ENCODE measurements at regions of chr17 and their contacts with region 1.

Region 1: DNA sequence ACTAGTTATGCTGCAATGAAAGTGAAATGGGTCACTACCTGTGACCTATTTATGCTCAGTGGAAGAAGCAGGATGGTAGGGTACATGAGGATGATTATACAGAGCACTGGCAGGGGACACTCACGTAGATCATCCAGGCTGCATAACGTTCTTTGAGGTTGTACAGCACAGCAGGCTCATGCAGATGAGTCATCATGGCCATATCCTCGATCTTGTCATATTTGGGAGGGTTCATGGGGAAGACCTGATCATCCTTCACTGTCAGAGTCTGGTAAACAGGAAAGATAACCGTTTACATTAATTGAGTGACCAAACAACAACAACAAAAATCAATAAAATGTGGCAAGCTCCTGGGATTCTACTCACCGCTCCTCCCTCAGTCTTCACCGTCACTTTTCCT is 2.1 kb downstream of the MYH2 start:
- DNase-seq: no peak
- H3K4me3 ChIP-seq: no peak overlapping the region
- H3K27ac ChIP-seq: no peak overlapping the region
- H3K4me1 ChIP-seq: no peaks in the 10 kb centered on the region
- H3K27me3 ChIP-seq: no peaks in the 10 kb centered on the region
- CTCF ChIP-seq: no peak
- POLR2A ChIP-seq: no peak

Region 2: DNA sequence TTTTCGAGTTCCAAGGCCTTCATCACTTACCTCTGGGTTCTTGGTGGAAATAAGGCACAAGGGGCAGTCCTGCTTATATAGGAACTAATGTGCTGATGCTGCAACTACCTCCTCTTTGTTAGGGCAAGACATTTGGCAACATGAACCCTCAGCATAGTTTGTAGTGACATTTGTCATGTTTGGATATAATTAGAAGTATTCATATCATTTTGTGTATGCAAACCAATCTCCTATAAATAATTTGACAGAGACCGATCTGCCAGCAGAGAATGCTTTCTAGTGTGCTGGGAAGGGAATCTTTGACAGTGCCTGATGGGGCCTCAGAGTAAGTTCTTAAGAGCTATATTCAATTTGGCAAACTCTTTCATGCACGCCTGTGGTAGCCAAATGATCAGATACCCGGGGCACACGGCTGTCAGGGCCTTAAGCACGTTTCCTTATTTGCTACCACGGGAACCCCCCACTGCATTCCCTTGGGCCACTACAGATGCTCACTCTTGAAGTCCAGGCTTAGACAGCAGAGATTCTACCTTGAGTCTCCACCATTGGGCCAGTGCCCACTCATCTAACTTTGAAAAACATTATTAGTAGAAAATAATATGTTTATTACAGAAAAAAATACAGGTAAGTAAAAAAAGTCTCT is 125.3 kb before region 1 on chr17 and contains the start of gene MYH8:
- CTCF ChIA-PET with region 1: no interaction called
- POLR2A ChIA-PET with region 1: no interaction called
- dilution Hi-C with region 1: no loop called
- intact Hi-C with region 1: loop called (anchors 5 kb)
- DNase-seq: no peak
- H3K4me3 ChIP-seq: no peak within 1 kb of the TSS
- H3K27ac ChIP-seq: no peak within 1 kb of the TSS
- H3K4me1 ChIP-seq: no peaks in the 10 kb centered on the region
- H3K27me3 ChIP-seq: no peaks in the 10 kb centered on the region
- CTCF ChIP-seq: no peak
- POLR2A ChIP-seq: no peak
- total RNA-seq, gene MYH8: not detected in 2 replicates

Region 3: GRCh38 chr17:10600571-10600970 is 53.2 kb after region 1 on chr17:
- CTCF ChIA-PET with region 1: no interaction called
- POLR2A ChIA-PET with region 1: no interaction called
- dilution Hi-C with region 1: no loop called
- intact Hi-C with region 1: loop called (anchors 1 kb)
- DNase-seq: peak; percentile 16
- H3K4me3 ChIP-seq: no peak overlapping the region
- H3K27ac ChIP-seq: no peak overlapping the region
- H3K4me1 ChIP-seq: no peaks in the 10 kb centered on the region
- H3K27me3 ChIP-seq: no peaks in the 10 kb centered on the region
- CTCF ChIP-seq: no peak
- POLR2A ChIP-seq: no peak

Measured in endothelial cell of umbilical vein (primary cell).